Common myeloid progenitor, CD34-positive (primary cell): ENCODE measurements at regions of chr17 and their contacts with region 1.

Region 1: GRCh38 chr17:35764123-35764991 is 3.7 kb downstream of the C17orf50 start:
- DNase-seq: peak; percentile 91 to 93 (median 92)
- H3K4me3 ChIP-seq: peak overlapping the region; percentile 41 to 86 (median 73)
- H3K27ac ChIP-seq: no peak overlapping the region
- H3K4me1 ChIP-seq: peaks cover 0 to 21% (median 17%) of the 10 kb centered on the region in 4 experiments
- H3K27me3 ChIP-seq: no peaks in the 10 kb centered on the region

Region 2: DNA sequence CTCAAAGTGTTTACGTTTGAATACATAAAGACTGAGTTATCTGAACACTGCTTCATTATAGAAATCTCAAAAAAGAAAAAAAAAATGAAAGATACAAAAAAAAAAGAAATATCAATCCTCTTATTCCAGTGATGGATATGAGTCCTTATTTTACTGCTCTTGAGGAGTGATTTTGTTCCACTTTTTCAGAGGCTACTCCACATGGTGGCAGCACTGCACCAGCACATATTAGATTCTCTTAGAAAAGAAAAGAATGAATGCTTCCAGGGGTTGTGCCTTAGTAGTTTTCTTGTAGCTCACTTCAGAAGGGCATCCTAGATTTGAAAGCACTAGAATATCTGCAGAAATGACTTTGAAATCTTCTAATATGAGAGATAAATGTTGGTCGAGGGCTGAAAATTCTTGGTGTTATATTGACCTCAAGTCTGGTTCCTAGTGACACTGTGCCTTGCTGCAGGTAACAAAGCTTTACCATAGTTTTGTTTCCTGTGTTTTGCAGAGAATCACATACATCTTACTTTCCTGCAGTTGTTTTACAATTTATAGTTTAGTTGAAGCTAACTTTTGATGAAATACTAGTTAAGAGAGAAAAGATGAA is 151.3 kb before region 1 on chr17:
- CTCF ChIA-PET with region 1: interaction called, 12 read pairs
- POLR2A ChIA-PET with region 1: interaction called, 3 read pairs
- DNase-seq: peak; percentile 67 to 82 (median 74)
- H3K4me3 ChIP-seq: no peak overlapping the region
- H3K27ac ChIP-seq: no peak overlapping the region
- H3K4me1 ChIP-seq: peaks cover 0 to 31% (median 7%) of the 10 kb centered on the region in 4 experiments
- H3K27me3 ChIP-seq: no peaks in the 10 kb centered on the region

Region 3: DNA sequence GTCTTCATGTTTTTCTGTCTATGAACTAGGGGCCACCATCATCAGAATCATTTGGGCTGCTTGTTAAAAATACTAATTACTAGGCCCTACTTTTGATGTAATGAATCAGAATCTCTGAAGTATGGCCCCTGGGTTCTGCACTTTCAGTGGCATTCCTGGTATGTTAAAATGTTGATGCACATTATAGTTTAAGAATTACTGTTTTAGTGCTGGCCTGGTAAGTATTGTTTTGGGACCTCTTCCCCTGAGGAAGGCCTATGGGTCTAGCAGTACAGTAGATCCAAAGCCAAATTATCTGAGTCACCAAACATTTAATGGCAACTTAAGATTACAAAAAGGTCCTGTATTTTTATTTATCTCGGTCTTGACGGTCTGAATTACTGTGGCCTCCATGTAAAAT is 118.4 kb before region 1 on chr17:
- CTCF ChIA-PET with region 1: no interaction called
- POLR2A ChIA-PET with region 1: no interaction called
- DNase-seq: no peak
- H3K4me3 ChIP-seq: no peak overlapping the region
- H3K27ac ChIP-seq: no peak overlapping the region
- H3K4me1 ChIP-seq: no peaks in the 10 kb centered on the region
- H3K27me3 ChIP-seq: no peaks in the 10 kb centered on the region

Region 4: GRCh38 chr17:35774499-35774898 is 10.1 kb after region 1 on chr17:
- CTCF ChIA-PET with region 1: interaction called, 18 read pairs
- POLR2A ChIA-PET with region 1: no interaction called
- DNase-seq: no peak
- H3K4me3 ChIP-seq: no peak overlapping the region
- H3K27ac ChIP-seq: no peak overlapping the region
- H3K4me1 ChIP-seq: peaks cover 4 to 48% (median 38%) of the 10 kb centered on the region in 4 experiments
- H3K27me3 ChIP-seq: no peaks in the 10 kb centered on the region

Region 5: GRCh38 chr17:35788504-35789368 is 24.4 kb after region 1 on chr17:
- CTCF ChIA-PET with region 1: interaction called, 139 read pairs
- POLR2A ChIA-PET with region 1: interaction called, 3 read pairs
- DNase-seq: no peak
- H3K4me3 ChIP-seq: peak overlapping the region in 1 of 7 experiments; percentile 25
- H3K27ac ChIP-seq: no peak overlapping the region
- H3K4me1 ChIP-seq: peaks cover 6 to 30% (median 16%) of the 10 kb centered on the region in 4 experiments
- H3K27me3 ChIP-seq: no peaks in the 10 kb centered on the region

Region 6: DNA sequence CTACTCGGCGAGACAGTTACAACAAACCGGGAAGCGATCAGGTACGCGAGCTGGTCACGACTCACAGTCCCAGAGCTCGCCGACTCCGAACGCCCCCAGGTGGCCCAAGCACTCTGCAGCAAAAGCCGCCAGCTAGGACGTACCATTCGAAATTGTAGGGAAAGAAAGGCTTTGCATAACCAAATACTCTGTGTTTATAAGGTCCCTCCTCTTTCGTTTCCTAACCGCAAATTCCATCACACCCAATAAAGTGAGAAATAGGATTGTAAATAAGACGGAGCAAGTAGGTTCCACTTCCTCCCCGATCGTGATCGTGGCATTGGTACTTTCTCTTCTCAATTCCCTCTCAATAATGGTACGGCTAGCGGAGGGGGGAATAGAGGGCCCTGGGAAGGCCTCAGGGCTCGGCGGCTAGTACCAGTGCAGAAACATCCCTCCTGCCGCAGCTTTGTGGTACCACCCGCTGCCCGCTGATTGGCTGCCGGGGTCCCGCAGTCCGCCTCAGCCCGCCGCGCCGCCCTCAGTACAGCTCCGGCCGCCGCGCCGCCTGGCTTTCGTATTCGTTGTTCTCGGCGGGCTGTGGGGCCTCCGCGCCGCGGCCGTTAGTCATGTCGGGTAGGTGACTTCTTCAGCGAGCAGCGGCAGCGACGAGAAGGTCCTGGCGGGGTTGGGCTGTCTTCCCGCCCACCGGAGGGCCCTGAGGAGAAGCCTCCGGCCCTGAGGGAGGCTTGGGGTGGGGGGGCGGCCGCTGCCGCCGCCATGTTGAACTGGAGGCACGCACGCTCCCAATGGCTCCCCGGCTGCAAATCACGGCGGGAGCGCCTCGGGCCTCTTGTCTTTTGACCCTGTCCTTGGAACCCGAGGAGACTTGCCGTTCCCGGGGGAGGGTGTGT is 44.9 kb after region 1 on chr17 and contains the start of gene TAF15:
- CTCF ChIA-PET with region 1: interaction called, 482 read pairs
- POLR2A ChIA-PET with region 1: interaction called, 22 read pairs
- DNase-seq: peak; percentile 99
- H3K4me3 ChIP-seq: peak within 1 kb of the TSS; percentile 87 to 99 (median 93)
- H3K27ac ChIP-seq: peak within 1 kb of the TSS; percentile 94 to 97
- H3K4me1 ChIP-seq: peaks cover 13 to 52% (median 38%) of the 10 kb centered on the region in 4 experiments
- H3K27me3 ChIP-seq: no peaks in the 10 kb centered on the region